ENCODE measurements at regions of chr1 and their contacts with region 1.

Region 1: DNA sequence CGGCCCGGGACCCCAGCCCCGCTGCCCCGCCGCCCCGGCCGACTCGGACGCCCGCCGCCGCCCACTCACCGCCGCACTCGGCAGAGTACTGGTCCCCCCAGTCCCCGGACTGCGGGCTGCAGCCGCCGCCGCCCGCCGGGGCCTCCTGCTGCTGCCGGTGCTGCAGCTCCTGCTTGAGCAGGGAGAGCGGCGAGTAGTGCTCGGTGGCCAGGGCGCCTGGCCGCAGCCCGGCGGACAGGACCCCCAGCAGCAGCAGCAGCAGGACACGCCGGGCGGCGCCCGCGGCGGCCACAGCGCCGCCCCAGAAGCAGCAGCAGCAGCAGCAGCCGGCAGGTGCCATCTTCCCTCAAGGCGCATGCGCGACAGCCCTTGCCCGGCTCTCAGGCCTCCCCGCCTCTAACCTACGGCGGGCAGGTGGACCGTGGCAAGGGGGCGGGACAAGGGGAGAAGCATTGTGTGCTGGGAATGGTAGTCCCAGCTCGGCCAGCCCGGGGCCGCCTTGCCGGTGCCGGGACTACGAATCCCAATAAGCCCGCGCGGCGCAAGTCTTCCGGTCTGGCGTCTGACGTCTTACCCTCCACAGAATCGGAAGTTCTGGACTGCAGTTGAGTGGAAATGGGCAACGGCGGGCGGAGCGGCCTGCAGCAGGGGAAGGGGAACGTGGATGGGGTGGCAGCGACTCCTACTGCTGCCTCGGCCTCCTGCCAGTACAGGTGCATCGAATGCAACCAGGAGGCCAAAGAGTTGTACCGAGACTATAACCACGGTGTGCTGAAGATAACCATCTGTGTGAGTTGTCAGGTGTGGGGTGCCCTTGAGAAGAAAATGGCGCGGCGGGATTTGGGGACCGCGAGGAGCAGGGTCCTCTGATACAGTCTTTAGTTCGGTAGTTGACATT is at the starts of genes ARV1 and TTC13:
- DNase-seq: peak; percentile 99
- H3K4me3 ChIP-seq: peak within 1 kb of the TSS; percentile 72 to 96 (median 86)
- H3K27ac ChIP-seq: peak within 1 kb of the TSS; percentile 42
- H3K4me1 ChIP-seq: peaks cover 19% of the 10 kb centered on the region
- H3K27me3 ChIP-seq: no peaks in the 10 kb centered on the region
- CTCF ChIP-seq: peak; percentile 5 to 29
- POLR2A ChIP-seq: peak; percentile 88
- total RNA-seq, gene ARV1: 10.7 and 12.5 TPM in 2 replicates
- total RNA-seq, gene TTC13: 22.2 and 23.9 TPM in 2 replicates

Region 2: GRCh38 chr1:230768903-230769838 is 209.6 kb before region 1 on chr1:
- CTCF ChIA-PET with region 1: no interaction called
- POLR2A ChIA-PET with region 1: no interaction called
- dilution Hi-C with region 1: no loop called
- intact Hi-C with region 1: no loop called
- DNase-seq: no peak
- H3K4me3 ChIP-seq: no peak overlapping the region
- H3K27ac ChIP-seq: no peak overlapping the region
- H3K4me1 ChIP-seq: no peaks in the 10 kb centered on the region
- H3K27me3 ChIP-seq: no peaks in the 10 kb centered on the region
- CTCF ChIP-seq: no peak
- POLR2A ChIP-seq: no peak

Region 3: GRCh38 chr1:230797942-230798418 is 180.8 kb before region 1 on chr1:
- CTCF ChIA-PET with region 1: no interaction called
- POLR2A ChIA-PET with region 1: no interaction called
- dilution Hi-C with region 1: no loop called
- intact Hi-C with region 1: loop called (anchors 1 kb)
- DNase-seq: peak; percentile 50
- H3K4me3 ChIP-seq: no peak overlapping the region
- H3K27ac ChIP-seq: no peak overlapping the region
- H3K4me1 ChIP-seq: no peaks in the 10 kb centered on the region
- H3K27me3 ChIP-seq: no peaks in the 10 kb centered on the region
- CTCF ChIP-seq: peak; percentile 39 to 65
- POLR2A ChIP-seq: no peak

Region 4: GRCh38 chr1:230917284-230918135 is 61.2 kb before region 1 on chr1:
- CTCF ChIA-PET with region 1: interaction called, 3 read pairs
- POLR2A ChIA-PET with region 1: no interaction called
- dilution Hi-C with region 1: no loop called
- intact Hi-C with region 1: loop called (anchors 1 kb)
- DNase-seq: peak; percentile 72
- H3K4me3 ChIP-seq: no peak overlapping the region
- H3K27ac ChIP-seq: no peak overlapping the region
- H3K4me1 ChIP-seq: no peaks in the 10 kb centered on the region
- H3K27me3 ChIP-seq: no peaks in the 10 kb centered on the region
- CTCF ChIP-seq: peak; percentile 73 to 77
- POLR2A ChIP-seq: no peak

Region 5: DNA sequence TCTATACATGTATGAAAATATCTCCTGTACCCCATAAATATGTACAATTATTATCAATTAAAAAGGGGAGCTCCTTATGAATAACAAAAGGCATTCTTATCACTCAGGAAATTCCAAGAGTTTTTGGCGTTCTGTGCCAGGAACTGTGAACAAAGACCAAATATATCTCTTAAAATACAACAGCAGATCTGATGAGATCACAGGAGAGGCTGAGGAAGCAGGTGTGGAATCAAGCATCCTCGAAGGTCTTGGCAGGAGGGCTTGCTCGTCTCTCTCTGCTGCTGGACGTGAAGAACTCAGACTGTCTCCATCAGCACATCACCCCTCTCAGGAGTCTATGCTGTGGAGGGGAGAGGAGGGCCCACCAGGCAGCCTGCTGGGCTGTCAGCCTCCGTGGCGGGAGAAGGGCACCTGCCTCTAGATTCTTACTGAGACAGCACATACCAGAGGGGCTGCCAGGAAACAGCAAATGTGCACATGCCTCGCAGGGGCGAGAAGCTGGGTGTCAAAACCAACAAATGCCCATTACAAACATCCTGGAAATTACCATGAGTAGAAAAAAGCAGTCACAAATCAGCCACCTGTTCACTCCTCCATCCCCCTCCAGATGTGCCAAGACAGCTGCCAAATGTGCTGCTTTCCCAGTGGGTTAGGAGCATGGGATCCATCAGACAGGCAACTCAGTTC is 92.2 kb after region 1 on chr1:
- CTCF ChIA-PET with region 1: interaction called, 3 read pairs
- POLR2A ChIA-PET with region 1: no interaction called
- dilution Hi-C with region 1: no loop called
- intact Hi-C with region 1: loop called (anchors 2 kb)
- DNase-seq: peak; percentile 71
- H3K4me3 ChIP-seq: no peak overlapping the region
- H3K27ac ChIP-seq: peak overlapping the region; percentile 22
- H3K4me1 ChIP-seq: peaks cover 13% of the 10 kb centered on the region
- H3K27me3 ChIP-seq: peaks cover 0 to 4% of the 10 kb centered on the region in 2 experiments
- CTCF ChIP-seq: no peak
- POLR2A ChIP-seq: no peak

Region 6: GRCh38 chr1:231211005-231211857 is 232.5 kb after region 1 on chr1:
- CTCF ChIA-PET with region 1: no interaction called
- POLR2A ChIA-PET with region 1: no interaction called
- dilution Hi-C with region 1: no loop called
- intact Hi-C with region 1: loop called (anchors 1 kb)
- DNase-seq: peak; percentile 76
- H3K4me3 ChIP-seq: peak overlapping the region; percentile 6 to 52 (median 37)
- H3K27ac ChIP-seq: no peak overlapping the region
- H3K4me1 ChIP-seq: peaks cover 2% of the 10 kb centered on the region
- H3K27me3 ChIP-seq: peaks cover 0 to 5% of the 10 kb centered on the region in 2 experiments
- CTCF ChIP-seq: peak; percentile 84 to 90
- POLR2A ChIP-seq: no peak

Region 7: GRCh38 chr1:231421993-231422764 is 443.4 kb after region 1 on chr1 and contains the start of gene EGLN1:
- CTCF ChIA-PET with region 1: no interaction called
- POLR2A ChIA-PET with region 1: no interaction called
- dilution Hi-C with region 1: no loop called
- intact Hi-C with region 1: loop called (anchors 5 kb)
- DNase-seq: peak; percentile 95
- H3K4me3 ChIP-seq: peak within 1 kb of the TSS; percentile 63 to 97 (median 91)
- H3K27ac ChIP-seq: peak within 1 kb of the TSS; percentile 89
- H3K4me1 ChIP-seq: peaks cover 43% of the 10 kb centered on the region
- H3K27me3 ChIP-seq: no peaks in the 10 kb centered on the region
- CTCF ChIP-seq: peak; percentile 14 to 33
- POLR2A ChIP-seq: peak; percentile 84
- total RNA-seq, gene EGLN1: 37.4 and 38.1 TPM in 2 replicates